HEK293 (cell line): ENCODE measurements at regions of chr2 and their contacts with region 1.

Region 1: DNA sequence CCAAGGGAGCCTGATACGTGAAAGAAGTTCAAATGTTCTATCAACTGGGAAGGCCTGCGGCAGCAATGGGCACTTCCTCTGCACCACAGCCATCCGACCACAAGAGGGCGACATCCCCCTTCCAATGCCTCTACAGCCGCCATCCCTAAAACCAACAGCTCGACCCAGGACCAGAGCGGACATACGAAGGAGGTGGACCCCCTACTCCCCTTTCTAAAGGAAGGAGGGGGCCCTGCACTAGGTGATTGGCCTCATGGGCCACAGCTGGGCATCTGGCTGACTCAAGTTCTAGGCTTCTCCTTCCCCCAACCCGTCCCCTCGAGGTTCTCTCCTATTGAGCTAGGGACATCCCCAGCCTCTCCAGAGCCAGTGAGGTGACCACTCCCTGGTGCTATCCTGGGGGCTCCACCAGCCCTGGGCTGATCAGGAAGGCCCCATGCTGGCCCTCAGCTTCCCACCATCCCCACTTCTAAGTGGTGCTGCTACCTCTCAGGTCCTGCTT is 217.2 kb downstream of the TNS1 start:
- H3K4me3 ChIP-seq: no peak overlapping the region
- H3K27ac ChIP-seq: no peak overlapping the region
- H3K4me1 ChIP-seq: no peaks in the 10 kb centered on the region
- CTCF ChIP-seq: peak; percentile 89

Region 2: GRCh38 chr2:217743966-217744761 is 41.4 kb before region 1 on chr2:
- CTCF ChIA-PET with region 1: no interaction called
- POLR2A ChIA-PET with region 1: no interaction called
- H3K4me3 ChIP-seq: no peak overlapping the region
- H3K27ac ChIP-seq: no peak overlapping the region
- H3K4me1 ChIP-seq: no peaks in the 10 kb centered on the region
- CTCF ChIP-seq: no peak

Region 3: GRCh38 chr2:217804786-217805667 is 19.4 kb after region 1 on chr2:
- CTCF ChIA-PET with region 1: interaction called, 33 read pairs
- POLR2A ChIA-PET with region 1: no interaction called
- H3K4me3 ChIP-seq: no peak overlapping the region
- H3K27ac ChIP-seq: no peak overlapping the region
- H3K4me1 ChIP-seq: no peaks in the 10 kb centered on the region
- CTCF ChIP-seq: no peak

Region 4: GRCh38 chr2:217899231-217900009 is 113.8 kb after region 1 on chr2:
- CTCF ChIA-PET with region 1: interaction called, 387 read pairs
- POLR2A ChIA-PET with region 1: no interaction called
- H3K4me3 ChIP-seq: no peak overlapping the region
- H3K27ac ChIP-seq: no peak overlapping the region
- H3K4me1 ChIP-seq: no peaks in the 10 kb centered on the region
- CTCF ChIP-seq: peak; percentile 47

Region 5: GRCh38 chr2:217993817-217994463 is 208.3 kb after region 1 on chr2:
- CTCF ChIA-PET with region 1: interaction called, 107 read pairs
- POLR2A ChIA-PET with region 1: no interaction called
- H3K4me3 ChIP-seq: no peak overlapping the region
- H3K27ac ChIP-seq: no peak overlapping the region
- H3K4me1 ChIP-seq: peaks cover 4% of the 10 kb centered on the region; the same call in 1 of the 2 replicates
- CTCF ChIP-seq: peak; percentile 71

Region 6: GRCh38 chr2:218066926-218067515 is 281.4 kb after region 1 on chr2:
- CTCF ChIA-PET with region 1: interaction called, 14 read pairs
- POLR2A ChIA-PET with region 1: no interaction called
- H3K4me3 ChIP-seq: no peak overlapping the region
- H3K27ac ChIP-seq: no peak overlapping the region
- H3K4me1 ChIP-seq: no peaks in the 10 kb centered on the region
- CTCF ChIP-seq: no peak